ACHN (cell line): ENCODE measurements at regions of chr9 and their contacts with region 1.

Region 1: DNA sequence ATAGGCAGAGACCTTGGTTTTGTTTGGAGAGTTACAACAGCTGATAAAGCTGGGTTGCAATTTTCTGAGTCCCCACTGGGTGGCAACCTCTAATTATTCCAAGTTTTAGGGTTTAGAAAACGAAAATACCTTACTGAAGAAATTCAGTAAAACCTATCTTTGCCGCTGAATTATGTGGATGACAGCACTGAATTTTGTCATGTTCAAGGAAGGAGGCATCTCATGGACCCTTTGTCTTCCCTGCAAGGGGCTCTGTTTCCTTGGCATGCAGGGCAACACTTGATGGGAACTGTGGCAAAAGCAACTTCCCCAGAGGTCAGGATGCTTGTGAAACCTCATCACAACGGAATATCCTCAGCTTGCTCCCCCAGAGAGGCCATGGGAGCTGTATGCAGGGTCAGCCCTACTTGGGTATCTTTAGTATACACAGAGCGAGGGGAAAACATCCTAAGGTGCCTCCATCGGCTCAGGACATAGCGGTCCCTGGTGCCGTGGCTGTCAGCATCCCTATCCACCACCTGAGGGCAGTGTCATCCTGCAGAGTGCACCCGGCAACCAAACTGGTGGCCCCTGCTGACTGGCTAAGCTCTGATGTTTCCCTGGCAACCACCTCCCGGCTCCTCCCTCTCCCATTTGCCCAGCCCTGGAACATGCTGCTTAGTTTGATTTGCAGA is 123.1 kb downstream of the RXRA start:
- DNase-seq: peak; percentile 67

Region 2: GRCh38 chr9:134178768-134179551 is 270.4 kb before region 1 on chr9:
- in situ Hi-C with region 1: loop called (anchors 25 kb)
- DNase-seq: no peak